Heart right ventricle (tissue), 16 donors: ENCODE measurements at regions of chr3 and their contacts with region 1.

Region 1: GRCh38 chr3:71652781-71653413 is 69.4 kb upstream of the FOXP1 start:
- DNase-seq: peak in 1 of 2 donors; percentile 23
- ATAC-seq: peak in 7 of 8 donors; percentile 48 to 76 (median 63)
- H3K4me3 ChIP-seq: no peak overlapping the region
- H3K27ac ChIP-seq: no peak overlapping the region
- H3K4me1 ChIP-seq: peaks cover 0 to 11% (median 2%) of the 10 kb centered on the region in 9 donors
- H3K27me3 ChIP-seq: no peaks in the 10 kb centered on the region
- CTCF ChIP-seq: peak; percentile 15 to 68 (median 55)

Region 2: GRCh38 chr3:70064194-70064779 is 1588.6 kb before region 1 on chr3:
- intact Hi-C with region 1: loop called in 2 of 10 experiments (anchors 10 kb)
- DNase-seq: peak in 1 of 2 donors; percentile 11
- ATAC-seq: no peak
- H3K4me3 ChIP-seq: no peak overlapping the region
- H3K27ac ChIP-seq: no peak overlapping the region
- H3K4me1 ChIP-seq: peaks cover 0 to 13% (median 7%) of the 10 kb centered on the region in 9 donors
- H3K27me3 ChIP-seq: peaks cover 0 to 17% (median 0%) of the 10 kb centered on the region in 7 donors
- CTCF ChIP-seq: peak in 8 of 9 donors; percentile 20 to 76 (median 67)

Region 3: DNA sequence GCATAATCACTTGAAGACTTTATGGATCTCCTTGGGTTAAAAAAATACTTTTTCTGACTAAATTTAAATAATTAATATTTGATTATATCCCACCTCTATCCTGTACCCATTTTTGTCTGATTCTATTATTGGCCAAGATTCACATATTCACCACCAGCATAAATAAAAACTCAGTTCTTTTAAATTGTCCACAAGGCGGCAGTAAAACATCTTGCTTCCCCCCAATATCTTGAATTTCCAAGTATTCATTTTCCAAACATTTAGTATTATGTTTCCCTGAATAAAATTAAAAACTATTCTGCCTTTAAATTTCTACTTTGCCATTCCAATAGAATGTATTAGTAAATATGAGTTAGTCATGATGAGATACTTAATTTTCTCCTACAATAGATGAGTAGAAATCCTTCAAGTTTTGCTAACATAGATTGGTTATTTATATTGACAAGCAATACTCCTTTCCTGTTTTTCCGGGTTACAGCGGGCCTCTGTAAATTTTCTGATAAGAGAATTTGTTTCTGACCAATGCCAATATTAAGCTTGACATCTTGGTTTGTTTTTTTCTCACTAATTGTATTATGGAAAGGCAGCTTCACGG is 1121.7 kb before region 1 on chr3:
- intact Hi-C with region 1: loop called in 5 of 10 experiments (anchors 2 to 10 kb)
- DNase-seq: no peak
- ATAC-seq: no peak
- H3K4me3 ChIP-seq: no peak overlapping the region
- H3K27ac ChIP-seq: no peak overlapping the region
- H3K4me1 ChIP-seq: no peaks in the 10 kb centered on the region
- H3K27me3 ChIP-seq: peaks cover 0 to 10% (median 4%) of the 10 kb centered on the region in 7 donors
- CTCF ChIP-seq: peak in 8 of 9 donors; percentile 31 to 70 (median 58)

Region 4: DNA sequence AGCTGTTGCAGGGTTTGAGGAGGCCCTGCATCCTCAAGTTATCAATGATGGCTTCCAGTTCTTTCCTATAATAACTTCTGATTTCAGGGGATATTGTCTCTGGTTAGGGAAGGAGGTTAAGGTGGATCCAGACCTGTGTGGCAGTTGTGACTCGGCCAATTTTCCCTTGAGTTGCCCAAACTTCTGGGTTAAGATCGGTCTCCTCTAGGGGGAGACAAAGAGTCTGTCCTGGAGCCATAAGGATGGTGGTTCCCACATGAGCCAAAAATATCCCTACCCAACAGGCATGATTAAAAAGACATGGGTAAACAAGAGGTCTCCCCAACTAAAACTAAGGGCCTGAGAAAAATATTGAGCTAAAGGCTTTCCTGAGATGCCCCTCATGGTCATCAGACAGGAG is 1113.0 kb before region 1 on chr3:
- intact Hi-C with region 1: loop called in 4 of 10 experiments (anchors 5 to 10 kb)
- DNase-seq: no peak
- ATAC-seq: no peak
- H3K4me3 ChIP-seq: no peak overlapping the region
- H3K27ac ChIP-seq: no peak overlapping the region
- H3K4me1 ChIP-seq: no peaks in the 10 kb centered on the region
- H3K27me3 ChIP-seq: peaks cover 0 to 8% (median 3%) of the 10 kb centered on the region in 7 donors
- CTCF ChIP-seq: peak in 1 of 9 donors; percentile 6

Region 5: DNA sequence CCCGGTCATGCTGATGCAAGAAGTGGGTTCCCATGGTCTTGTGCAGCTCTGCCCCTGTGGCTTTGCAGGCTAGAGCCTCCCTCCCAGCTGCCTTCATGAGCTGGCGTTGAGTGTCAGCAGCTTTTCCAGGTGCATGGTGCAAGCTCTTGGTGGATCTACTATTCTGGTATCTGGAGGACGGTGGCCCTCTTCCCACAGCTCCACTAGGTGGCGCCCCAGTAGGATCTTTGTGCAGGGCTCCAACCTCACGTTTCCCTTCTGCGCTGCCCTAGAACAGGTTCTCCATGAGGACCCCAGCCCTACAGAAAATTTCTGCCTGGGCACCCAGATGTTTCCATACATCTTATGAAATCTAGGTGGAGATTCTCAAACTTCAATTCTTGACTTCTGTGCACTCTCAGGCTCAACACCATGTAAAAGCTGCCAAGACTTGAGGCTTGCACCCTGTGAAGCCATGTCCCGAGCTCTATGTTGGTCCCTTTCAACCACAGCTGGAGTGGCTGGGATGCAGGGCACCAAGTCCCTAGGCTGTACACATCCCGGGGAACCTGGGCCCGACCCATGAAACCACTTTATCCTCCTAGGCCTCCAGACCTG is 1102.1 kb before region 1 on chr3:
- intact Hi-C with region 1: loop called in 5 of 10 experiments (anchors 1 to 10 kb)
- DNase-seq: peak; percentile 65 to 72
- ATAC-seq: peak; percentile 76 to 92 (median 82)
- H3K4me3 ChIP-seq: no peak overlapping the region
- H3K27ac ChIP-seq: no peak overlapping the region
- H3K4me1 ChIP-seq: no peaks in the 10 kb centered on the region
- H3K27me3 ChIP-seq: no peaks in the 10 kb centered on the region
- CTCF ChIP-seq: peak; percentile 67 to 86 (median 81)

Region 6: GRCh38 chr3:70716832-70717231 is 936.1 kb before region 1 on chr3:
- intact Hi-C with region 1: loop called in 1 of 10 experiments (anchors 10 kb)
- DNase-seq: peak; percentile 14 to 32
- ATAC-seq: peak in 5 of 8 donors; percentile 49 to 88 (median 62)
- H3K4me3 ChIP-seq: no peak overlapping the region
- H3K27ac ChIP-seq: no peak overlapping the region
- H3K4me1 ChIP-seq: no peaks in the 10 kb centered on the region
- H3K27me3 ChIP-seq: no peaks in the 10 kb centered on the region
- CTCF ChIP-seq: peak; percentile 17 to 72 (median 54)

Region 7: DNA sequence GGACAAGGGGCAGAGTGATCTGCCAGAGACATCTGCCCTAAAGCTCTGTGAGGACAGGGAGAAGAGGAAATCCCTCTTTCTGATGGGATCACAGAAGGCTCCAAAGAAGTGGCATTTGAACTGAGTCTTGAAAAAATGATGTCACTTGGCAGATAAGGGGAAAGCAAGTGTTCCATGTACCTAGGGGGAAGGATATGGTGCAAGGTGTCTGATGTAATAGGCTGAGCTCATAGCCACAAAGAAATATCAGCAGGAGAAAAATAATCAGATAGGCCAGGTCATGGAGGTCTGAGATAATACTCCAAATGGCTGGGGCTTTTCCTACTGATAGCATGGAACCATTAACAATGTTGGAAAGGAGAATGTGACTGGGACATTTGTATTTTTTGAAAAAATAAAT is 872.1 kb before region 1 on chr3:
- intact Hi-C with region 1: no loop called
- DNase-seq: no peak
- ATAC-seq: no peak
- H3K4me3 ChIP-seq: no peak overlapping the region
- H3K27ac ChIP-seq: no peak overlapping the region
- H3K4me1 ChIP-seq: no peaks in the 10 kb centered on the region
- H3K27me3 ChIP-seq: no peaks in the 10 kb centered on the region
- CTCF ChIP-seq: no peak

Region 8: GRCh38 chr3:71542521-71543370 is 110.2 kb before region 1 on chr3:
- intact Hi-C with region 1: no loop called
- DNase-seq: peak; percentile 75 to 83
- ATAC-seq: peak; percentile 95 to 100 (median 98)
- H3K4me3 ChIP-seq: peak overlapping the region in 6 of 10 donors; percentile 18 to 34 (median 29)
- H3K27ac ChIP-seq: peak overlapping the region in 7 of 10 donors; percentile 9 to 68 (median 63)
- H3K4me1 ChIP-seq: peaks cover 5 to 56% (median 22%) of the 10 kb centered on the region in 9 donors
- H3K27me3 ChIP-seq: no peaks in the 10 kb centered on the region
- CTCF ChIP-seq: no peak

Region 9: GRCh38 chr3:71599416-71599815 is 53.5 kb before region 1 on chr3:
- intact Hi-C with region 1: no loop called
- DNase-seq: no peak
- ATAC-seq: peak in 1 of 8 donors; percentile 20
- H3K4me3 ChIP-seq: no peak overlapping the region
- H3K27ac ChIP-seq: no peak overlapping the region
- H3K4me1 ChIP-seq: peaks cover 0 to 7% (median 0%) of the 10 kb centered on the region in 9 donors
- H3K27me3 ChIP-seq: no peaks in the 10 kb centered on the region
- CTCF ChIP-seq: no peak